SK-N-SH (cell line): ENCODE measurements at regions of chr6 and their contacts with region 1.

Region 1: GRCh38 chr6:28496099-28496779 is 19.4 kb downstream of the GPX6 start:
- DNase-seq: no peak
- H3K4me3 ChIP-seq: no peak overlapping the region
- H3K27ac ChIP-seq: no peak overlapping the region
- H3K4me1 ChIP-seq: no peaks in the 10 kb centered on the region
- H3K27me3 ChIP-seq: no peaks in the 10 kb centered on the region; the same call in 1 of the 2 replicates
- CTCF ChIP-seq: peak; percentile 32
- EP300 ChIP-seq: no peak
- RAD21 ChIP-seq: peak; percentile 64

Region 2: DNA sequence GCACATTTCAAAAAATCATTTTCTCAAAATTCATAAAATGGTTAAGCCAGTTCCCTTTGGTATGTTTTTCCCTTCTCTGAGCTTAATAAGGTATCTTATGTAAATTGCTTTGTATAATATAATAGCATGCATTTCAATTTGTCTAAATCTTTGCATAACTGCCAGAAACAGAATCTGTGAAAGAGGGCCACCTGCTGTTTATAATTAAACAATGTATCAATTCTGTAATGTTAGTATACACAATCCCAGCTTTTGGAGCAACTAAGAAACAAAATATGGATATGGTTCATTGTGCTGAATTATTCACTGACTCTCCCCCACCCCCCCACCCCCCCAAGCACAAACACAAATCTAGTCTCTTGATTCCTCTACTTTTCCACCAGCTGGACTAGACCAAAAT is 84.2 kb after region 1 on chr6:
- CTCF ChIA-PET with region 1: interaction called, 13 read pairs
- POLR2A ChIA-PET with region 1: no interaction called
- DNase-seq: no peak
- H3K4me3 ChIP-seq: no peak overlapping the region
- H3K27ac ChIP-seq: no peak overlapping the region
- H3K4me1 ChIP-seq: peaks cover 3 to 6% of the 10 kb centered on the region in 2 experiments; a peak in 2 of 4 replicates
- H3K27me3 ChIP-seq: no peaks in the 10 kb centered on the region
- CTCF ChIP-seq: peak; percentile 25
- EP300 ChIP-seq: no peak
- RAD21 ChIP-seq: peak; percentile 50